ENCODE measurements at regions of chr6 and their contacts with region 1.

Region 1: DNA sequence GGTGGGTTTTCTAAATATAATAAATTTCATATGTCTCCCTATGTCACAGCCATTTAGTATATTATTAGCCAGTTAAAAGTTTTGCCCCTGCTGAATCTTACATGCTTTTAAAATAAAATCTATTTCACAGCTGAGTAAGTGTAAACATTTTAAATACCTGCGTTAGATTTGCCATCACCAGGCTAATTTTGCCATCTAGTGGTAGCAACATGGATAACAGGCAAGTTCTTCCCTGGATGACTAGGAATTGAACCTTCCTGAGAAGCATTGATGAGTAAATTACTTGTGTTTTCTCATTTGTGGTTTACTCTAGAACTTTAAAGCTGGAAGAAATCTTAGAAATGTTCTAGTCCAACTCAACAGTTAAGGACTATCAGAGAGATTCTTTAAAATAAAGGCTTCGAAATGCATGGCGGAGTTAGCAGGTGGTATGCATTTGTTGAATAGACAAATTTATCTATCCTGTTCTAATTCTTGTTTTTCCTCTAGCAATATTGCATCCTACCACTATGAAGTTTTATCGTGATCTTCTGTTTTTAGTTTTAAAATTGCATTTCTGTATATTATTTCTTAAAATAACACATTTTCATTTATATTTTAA is 2.6 kb downstream of the PRSS35 start:
- DNase-seq: no peak
- ATAC-seq: no peak
- H3K4me3 Mint-ChIP-seq: no peak overlapping the region
- H3K27ac Mint-ChIP-seq: no peak overlapping the region
- H3K4me1 Mint-ChIP-seq: peaks cover 7% of the 10 kb centered on the region
- H3K27me3 Mint-ChIP-seq: peaks cover 39% of the 10 kb centered on the region

Region 2: DNA sequence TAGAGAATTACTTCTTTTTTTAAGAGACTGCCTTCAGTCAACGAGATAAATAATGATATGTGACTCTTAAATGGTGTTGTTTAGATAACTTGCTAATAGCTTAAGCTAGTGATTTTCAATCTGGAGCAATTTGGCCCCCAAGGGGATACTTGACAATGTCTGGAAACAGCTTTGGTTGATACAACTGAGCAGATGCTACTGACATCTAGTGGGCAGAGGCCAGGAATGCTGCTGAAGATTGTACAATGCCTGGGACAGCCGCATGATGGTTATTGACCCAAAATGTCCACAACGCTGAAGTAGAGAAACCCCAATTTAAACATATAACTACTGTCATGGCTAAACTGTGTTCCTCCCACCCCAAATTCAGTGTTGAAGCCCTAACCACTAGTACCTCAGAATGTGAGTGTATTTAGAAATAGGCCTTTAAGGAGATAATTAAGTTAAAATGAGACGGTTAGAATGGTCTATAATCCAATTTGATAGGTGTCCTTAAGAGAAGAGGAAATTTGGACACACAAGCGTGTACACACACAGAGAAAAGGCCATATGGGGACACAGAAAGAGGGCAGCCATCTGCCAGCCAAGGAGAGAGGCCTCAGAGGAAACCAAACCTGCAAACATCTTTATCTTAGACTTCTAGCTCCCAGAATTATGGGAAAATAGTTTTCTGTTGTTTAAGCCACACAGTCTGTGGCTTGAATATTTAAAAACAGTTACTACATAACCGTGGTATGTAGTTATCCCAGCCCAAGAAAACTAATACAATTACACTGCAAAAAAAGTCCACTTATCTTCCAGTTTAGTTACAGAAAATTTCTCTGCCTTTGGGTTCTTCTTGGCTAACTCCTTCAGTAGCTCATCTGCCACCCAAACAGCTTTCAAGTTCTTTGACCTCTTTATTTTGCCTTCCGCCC is 299.6 kb before region 1 on chr6:
- CTCF ChIA-PET with region 1: interaction called, 15 read pairs
- DNase-seq: peak; percentile 78
- ATAC-seq: peak; percentile 99
- H3K4me3 Mint-ChIP-seq: no peak overlapping the region
- H3K27ac Mint-ChIP-seq: no peak overlapping the region
- H3K4me1 Mint-ChIP-seq: peaks cover 5% of the 10 kb centered on the region
- H3K27me3 Mint-ChIP-seq: peaks cover 29% of the 10 kb centered on the region

Region 3: DNA sequence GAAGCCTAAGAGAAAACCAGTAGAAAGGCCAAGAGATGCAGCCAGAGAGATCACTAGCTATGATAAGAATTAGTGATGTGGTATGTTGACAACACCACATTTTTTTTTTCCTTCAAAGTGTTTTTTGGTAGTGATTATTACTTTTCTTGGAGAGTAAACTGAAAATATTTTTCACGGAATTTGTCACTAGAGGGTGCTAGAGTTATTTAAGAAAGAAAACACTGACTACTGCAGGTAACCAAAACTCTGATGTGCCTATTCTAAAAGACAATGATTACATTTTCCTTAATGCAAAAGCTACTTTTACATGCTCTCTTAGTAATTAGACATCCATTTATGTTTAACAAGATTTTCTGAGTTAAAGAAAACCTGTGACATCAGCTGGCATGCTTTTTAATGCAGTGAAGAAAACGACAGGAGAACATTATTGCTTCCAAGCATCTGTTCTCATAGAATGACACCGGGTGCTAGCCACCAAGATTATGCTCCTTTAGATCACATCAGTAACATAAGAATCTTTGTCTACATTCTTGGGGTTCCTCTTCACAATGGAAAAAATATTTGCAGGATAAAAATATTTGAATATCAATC is 293.0 kb before region 1 on chr6:
- CTCF ChIA-PET with region 1: interaction called, 62 read pairs
- DNase-seq: no peak
- ATAC-seq: no peak
- H3K4me3 Mint-ChIP-seq: no peak overlapping the region
- H3K27ac Mint-ChIP-seq: no peak overlapping the region
- H3K4me1 Mint-ChIP-seq: no peaks in the 10 kb centered on the region
- H3K27me3 Mint-ChIP-seq: peaks cover 3% of the 10 kb centered on the region

Measured in activated CD8-positive, alpha-beta memory T cell treated with anti-CD3 and anti-CD28 coated beads, Interleukin-2, amount 10 ng/mL, durations not matched to agents 7 days and 5 days (primary cell).